CD4-positive, alpha-beta memory T cell (primary cell): ENCODE measurements at regions of chr10 and their contacts with region 1.

Region 1: DNA sequence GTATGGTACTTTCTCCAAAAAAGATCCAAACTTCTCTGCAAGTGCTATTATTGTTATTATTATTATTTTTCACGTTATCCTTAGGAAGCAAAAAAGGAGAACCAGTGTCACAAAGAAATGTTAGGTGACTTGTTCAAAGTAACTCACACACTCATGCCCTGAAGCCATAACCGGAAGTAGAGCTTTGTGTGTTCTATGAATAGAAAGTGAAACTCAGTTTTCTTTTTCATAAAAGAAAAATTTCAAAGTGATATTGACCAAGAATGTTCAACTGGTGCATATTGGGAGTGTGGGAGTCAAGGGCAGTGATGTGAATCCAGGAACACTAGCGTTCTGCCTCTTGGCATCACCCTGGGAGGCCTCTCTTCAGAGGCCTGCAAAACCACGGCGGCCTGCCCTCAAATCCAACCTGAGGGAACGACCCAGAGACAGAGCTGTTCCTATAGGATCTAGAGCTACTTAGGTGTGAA is 106.1 kb downstream of the PRKCQ start:
- DNase-seq: peak; percentile 60 to 74 (median 69)
- H3K4me3 ChIP-seq: peak overlapping the region; percentile 32 to 56
- H3K4me3 Mint-ChIP-seq: peak overlapping the region; percentile 82 to 90 (median 88)
- H3K27ac ChIP-seq: peak overlapping the region; percentile 85
- H3K27ac Mint-ChIP-seq: peak overlapping the region; percentile 93 to 99 (median 95)
- H3K4me1 ChIP-seq: peaks cover 44% of the 10 kb centered on the region
- H3K4me1 Mint-ChIP-seq: peaks cover 43 to 67% (median 56%) of the 10 kb centered on the region in 4 donors
- H3K27me3 ChIP-seq: no peaks in the 10 kb centered on the region
- H3K27me3 Mint-ChIP-seq: no peaks in the 10 kb centered on the region

Region 2: DNA sequence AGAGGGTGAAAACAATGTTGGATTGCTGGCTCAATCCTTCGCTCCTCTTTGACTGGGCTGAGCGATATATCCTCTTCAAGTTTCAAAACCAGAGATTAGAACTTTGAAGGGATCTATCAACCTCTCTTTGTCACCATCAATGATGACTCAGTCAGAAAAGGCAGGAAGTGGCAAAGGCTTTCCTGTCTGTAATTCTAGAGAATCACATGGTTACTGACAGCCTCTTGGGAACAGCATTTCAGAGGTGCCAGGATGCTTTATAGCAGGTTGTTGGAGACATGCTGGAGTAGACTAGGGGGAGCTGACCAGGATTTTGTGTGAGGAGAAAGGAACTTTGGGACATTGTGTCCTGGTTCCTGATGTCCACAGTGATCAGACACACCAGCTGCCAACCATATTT is 24.8 kb after region 1 on chr10:
- CTCF ChIA-PET with region 1: interaction called, 6 read pairs
- POLR2A ChIA-PET with region 1: interaction called, 11 read pairs
- intact Hi-C with region 1: loop called (anchors 1 kb)
- DNase-seq: peak; percentile 62 to 83 (median 74)
- H3K4me3 ChIP-seq: peak overlapping the region in 1 of 2 donors; percentile 4
- H3K4me3 Mint-ChIP-seq: peak overlapping the region in 7 of 8 donors; percentile 39 to 87 (median 75)
- H3K27ac ChIP-seq: peak overlapping the region; percentile 59
- H3K27ac Mint-ChIP-seq: peak overlapping the region in 6 of 7 donors; percentile 91 to 96 (median 95)
- H3K4me1 ChIP-seq: peaks cover 65% of the 10 kb centered on the region
- H3K4me1 Mint-ChIP-seq: peaks cover 40 to 49% (median 48%) of the 10 kb centered on the region in 4 donors
- H3K27me3 ChIP-seq: no peaks in the 10 kb centered on the region
- H3K27me3 Mint-ChIP-seq: no peaks in the 10 kb centered on the region

Region 3: DNA sequence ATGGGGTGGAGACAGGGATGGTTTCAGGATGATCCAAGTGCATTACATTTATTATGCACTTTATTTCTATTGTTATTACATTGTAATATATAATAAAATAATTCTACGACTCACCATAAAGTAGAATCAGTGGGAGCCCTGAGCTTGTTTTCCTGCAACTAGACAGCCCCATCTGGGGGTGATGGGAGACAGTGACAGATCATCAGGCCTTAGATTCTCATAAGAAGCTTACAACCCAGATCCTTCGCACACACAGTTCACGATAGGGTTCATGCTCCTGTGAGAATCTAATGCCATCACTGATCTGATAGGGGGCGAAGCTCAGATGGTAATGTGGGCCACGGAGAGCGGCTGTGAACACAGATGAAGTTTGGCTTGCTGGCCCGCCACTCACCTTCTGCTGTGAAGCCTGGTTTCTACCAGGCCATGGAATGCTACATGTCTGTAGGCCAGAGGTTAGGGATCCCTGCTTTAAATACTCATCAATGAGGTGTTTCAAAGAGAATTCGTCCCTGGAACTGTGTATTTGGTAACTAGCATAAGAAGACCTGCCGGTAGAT is 127.4 kb after region 1 on chr10:
- CTCF ChIA-PET with region 1: interaction called, 6 read pairs
- POLR2A ChIA-PET with region 1: interaction called, 10 read pairs
- intact Hi-C with region 1: loop called (anchors 2 kb)
- DNase-seq: peak; percentile 47 to 55 (median 53)
- H3K4me3 ChIP-seq: no peak overlapping the region
- H3K4me3 Mint-ChIP-seq: peak overlapping the region in 7 of 8 donors; percentile 38 to 85 (median 77)
- H3K27ac ChIP-seq: no peak overlapping the region
- H3K27ac Mint-ChIP-seq: peak overlapping the region; percentile 63 to 92 (median 85)
- H3K4me1 ChIP-seq: peaks cover 67% of the 10 kb centered on the region
- H3K4me1 Mint-ChIP-seq: peaks cover 46 to 81% (median 63%) of the 10 kb centered on the region in 4 donors
- H3K27me3 ChIP-seq: no peaks in the 10 kb centered on the region
- H3K27me3 Mint-ChIP-seq: no peaks in the 10 kb centered on the region

Region 4: DNA sequence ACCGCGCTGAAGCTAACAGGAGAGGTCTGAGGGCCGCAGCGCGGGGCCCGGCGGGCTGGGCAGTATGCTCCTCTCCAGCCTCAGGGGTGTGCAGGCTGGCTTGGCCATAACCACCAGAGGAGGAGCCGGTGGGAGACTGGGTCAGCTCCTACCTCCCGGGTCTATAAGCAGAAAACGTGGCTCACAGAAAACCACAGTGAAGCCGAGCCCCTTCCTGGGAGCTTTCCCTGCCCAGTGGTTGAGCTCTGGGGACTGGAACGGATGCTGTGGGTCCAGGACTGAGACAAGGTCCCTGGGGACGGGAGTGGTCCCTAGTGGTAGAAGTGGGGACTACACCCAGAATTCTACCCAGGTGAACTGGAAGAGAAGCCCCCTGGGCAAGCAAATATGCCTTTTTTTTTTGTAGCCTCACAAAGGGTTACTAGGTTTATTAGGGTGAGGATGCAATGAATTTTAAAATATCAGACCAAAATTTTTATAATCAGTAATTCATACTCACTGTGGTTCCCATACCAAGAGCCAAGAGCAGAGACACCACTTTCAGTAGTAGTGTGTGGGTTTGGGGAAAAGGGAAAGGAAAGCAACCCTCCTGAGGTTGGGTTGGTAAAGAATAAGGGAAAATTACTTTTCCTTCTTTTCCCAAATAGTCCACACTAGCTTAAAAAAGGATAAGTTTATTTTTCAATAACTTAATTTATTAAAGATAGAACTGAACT is 174.0 kb after region 1 on chr10:
- CTCF ChIA-PET with region 1: interaction called, 3 read pairs
- POLR2A ChIA-PET with region 1: interaction called, 3 read pairs
- intact Hi-C with region 1: loop called (anchors 1 kb)
- DNase-seq: peak; percentile 61 to 72 (median 65)
- H3K4me3 ChIP-seq: no peak overlapping the region
- H3K4me3 Mint-ChIP-seq: no peak overlapping the region
- H3K27ac ChIP-seq: no peak overlapping the region
- H3K27ac Mint-ChIP-seq: peak overlapping the region in 3 of 7 donors; percentile 4 to 75 (median 72)
- H3K4me1 ChIP-seq: peaks cover 23% of the 10 kb centered on the region
- H3K4me1 Mint-ChIP-seq: peaks cover 12 to 30% (median 17%) of the 10 kb centered on the region in 4 donors
- H3K27me3 ChIP-seq: no peaks in the 10 kb centered on the region
- H3K27me3 Mint-ChIP-seq: no peaks in the 10 kb centered on the region

Region 5: GRCh38 chr10:6678211-6678803 is 204.4 kb after region 1 on chr10:
- CTCF ChIA-PET with region 1: interaction called, 15 read pairs
- POLR2A ChIA-PET with region 1: no interaction called
- intact Hi-C with region 1: no loop called
- DNase-seq: peak; percentile 53 to 59 (median 55)
- H3K4me3 ChIP-seq: no peak overlapping the region
- H3K4me3 Mint-ChIP-seq: no peak overlapping the region
- H3K27ac ChIP-seq: no peak overlapping the region
- H3K27ac Mint-ChIP-seq: peak overlapping the region in 1 of 7 donors; percentile 52
- H3K4me1 ChIP-seq: no peaks in the 10 kb centered on the region
- H3K4me1 Mint-ChIP-seq: peaks cover 0 to 6% (median 5%) of the 10 kb centered on the region in 4 donors
- H3K27me3 ChIP-seq: peaks cover 3% of the 10 kb centered on the region
- H3K27me3 Mint-ChIP-seq: peaks cover 4 to 9% of the 10 kb centered on the region in 2 donors